Right lobe of liver (tissue), 6 donors: ENCODE measurements at regions of chr14 and their contacts with region 1.

Region 1: GRCh38 chr14:21203470-21204166 is 47.8 kb upstream of the OR5AU1 start:
- DNase-seq: no peak
- ATAC-seq: peak in 1 of 4 donors; percentile 3
- H3K4me3 ChIP-seq: no peak overlapping the region
- H3K27ac ChIP-seq: no peak overlapping the region
- H3K4me1 ChIP-seq: no peaks in the 10 kb centered on the region
- H3K27me3 ChIP-seq: no peaks in the 10 kb centered on the region
- CTCF ChIP-seq: no peak
- POLR2A ChIP-seq: no peak

Region 2: DNA sequence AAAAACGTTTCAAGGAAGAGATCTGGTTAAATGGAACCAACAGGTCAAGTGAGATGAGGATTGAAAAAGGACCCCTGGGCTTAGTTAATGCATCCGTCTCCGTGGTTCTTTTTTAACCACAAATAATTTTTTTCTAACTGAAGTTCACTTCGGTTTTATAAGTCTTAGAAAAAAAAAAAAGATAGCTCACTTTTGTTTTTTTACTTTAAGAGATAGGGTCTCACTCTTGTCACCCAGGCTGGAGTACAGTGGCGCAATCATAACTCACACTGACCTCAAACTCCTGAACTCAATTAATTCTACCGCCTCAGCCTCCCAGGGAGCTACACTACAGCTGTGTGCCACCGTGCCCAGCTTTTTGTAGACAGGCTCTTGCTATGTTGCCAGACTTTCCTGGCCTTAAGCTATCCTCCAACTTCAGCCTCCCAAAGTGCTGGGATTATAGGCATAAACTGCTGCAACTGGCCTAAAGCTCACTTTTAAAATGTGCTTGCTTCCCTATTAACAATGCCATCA is 53.8 kb after region 1 on chr14:
- intact Hi-C with region 1: loop called in 1 of 2 experiments (anchors 10 kb)
- DNase-seq: no peak
- ATAC-seq: peak; percentile 51 to 63 (median 55)
- H3K4me3 ChIP-seq: no peak overlapping the region
- H3K27ac ChIP-seq: peak overlapping the region in 1 of 3 donors; percentile 10
- H3K4me1 ChIP-seq: peaks cover 0 to 62% (median 19%) of the 10 kb centered on the region in 4 donors
- H3K27me3 ChIP-seq: no peaks in the 10 kb centered on the region
- CTCF ChIP-seq: no peak
- POLR2A ChIP-seq: no peak

Region 3: DNA sequence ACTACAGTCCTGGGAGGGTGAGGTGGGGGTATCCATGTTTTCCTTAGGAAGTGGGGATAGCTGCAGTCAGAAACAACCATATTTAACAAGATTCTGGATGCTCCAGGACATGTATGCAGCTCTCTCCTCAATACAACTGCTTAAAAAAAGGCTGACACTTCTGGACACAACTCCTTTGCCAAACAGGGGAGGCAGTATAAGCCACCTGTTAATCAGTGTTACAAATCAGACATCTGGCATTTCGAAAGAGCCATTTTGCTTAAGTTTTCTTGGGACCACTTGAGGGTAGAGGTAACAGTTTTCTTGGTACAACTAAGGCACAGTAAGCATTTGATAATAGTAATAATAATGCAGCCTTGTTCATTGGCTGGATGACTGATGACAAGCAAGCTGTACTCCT is 123.4 kb after region 1 on chr14:
- intact Hi-C with region 1: no loop called
- DNase-seq: no peak
- ATAC-seq: no peak
- H3K4me3 ChIP-seq: no peak overlapping the region
- H3K27ac ChIP-seq: no peak overlapping the region
- H3K4me1 ChIP-seq: no peaks in the 10 kb centered on the region
- H3K27me3 ChIP-seq: no peaks in the 10 kb centered on the region
- CTCF ChIP-seq: no peak
- POLR2A ChIP-seq: no peak